Activated CD8-positive, alpha-beta memory T cell treated with anti-CD3 and anti-CD28 coated beads, Interleukin-2, amount 10 ng/mL, durations not matched to agents 7 days and 5 days (primary cell): ENCODE measurements at regions of chr5 and their contacts with region 1.

Region 1: DNA sequence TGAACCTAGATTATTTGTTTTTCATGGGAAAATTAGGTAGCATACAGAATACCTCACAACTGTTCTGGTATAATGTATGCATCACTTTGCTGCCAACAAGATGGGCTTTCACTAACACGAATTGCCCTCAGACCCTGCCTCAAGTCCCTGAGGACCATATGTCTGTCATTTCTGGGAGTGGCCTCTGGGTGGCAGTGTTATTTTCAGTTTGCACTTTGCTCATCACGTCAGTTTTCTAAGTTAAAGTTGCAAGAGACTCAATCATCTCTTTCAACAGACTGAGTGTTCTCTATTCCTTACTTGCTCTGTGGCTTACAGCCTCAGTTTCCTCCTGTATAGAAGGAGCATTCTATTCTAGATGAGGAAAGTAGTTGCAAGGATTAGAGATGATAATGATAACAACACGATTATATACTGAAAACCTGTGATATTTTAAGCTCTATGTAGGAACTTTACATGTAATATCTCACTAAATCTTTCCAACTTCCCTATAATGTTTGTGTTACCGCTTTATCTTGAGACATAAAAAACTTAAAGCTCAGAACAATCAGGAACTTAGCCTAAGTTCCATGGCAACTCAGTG is 55.7 kb downstream of the TSSK1B start:
- DNase-seq: peak; percentile 75
- ATAC-seq: peak; percentile 71
- H3K4me3 Mint-ChIP-seq: no peak overlapping the region
- H3K27ac Mint-ChIP-seq: peak overlapping the region; percentile 12
- H3K4me1 Mint-ChIP-seq: peaks cover 42% of the 10 kb centered on the region
- H3K27me3 Mint-ChIP-seq: peaks cover 13% of the 10 kb centered on the region

Region 2: GRCh38 chr5:113336975-113337374 is 42.1 kb before region 1 on chr5:
- CTCF ChIA-PET with region 1: interaction called, 11 read pairs
- DNase-seq: peak; percentile 45
- ATAC-seq: peak; percentile 72
- H3K4me3 Mint-ChIP-seq: no peak overlapping the region
- H3K27ac Mint-ChIP-seq: no peak overlapping the region
- H3K4me1 Mint-ChIP-seq: peaks cover 11% of the 10 kb centered on the region
- H3K27me3 Mint-ChIP-seq: peaks cover 7% of the 10 kb centered on the region

Region 3: DNA sequence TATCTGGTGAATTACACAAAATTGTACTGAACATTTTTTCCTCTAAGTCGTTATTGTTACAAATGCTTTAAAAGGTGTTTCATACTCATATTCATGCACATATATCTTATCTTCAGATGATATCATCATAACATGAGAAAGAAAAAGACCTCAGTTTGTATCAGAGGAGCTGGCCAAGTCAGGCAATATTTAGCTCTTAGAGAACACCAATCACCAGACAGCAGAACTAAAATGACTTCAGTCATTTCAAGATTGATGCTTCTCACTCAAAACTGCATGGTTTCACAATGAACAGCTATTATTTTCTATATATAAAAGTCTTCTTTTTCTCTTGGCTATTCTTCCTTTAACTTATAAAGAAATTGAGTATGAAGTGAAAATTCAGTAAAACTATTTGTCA is 11.2 kb after region 1 on chr5:
- CTCF ChIA-PET with region 1: interaction called, 12 read pairs
- DNase-seq: no peak
- ATAC-seq: no peak
- H3K4me3 Mint-ChIP-seq: no peak overlapping the region
- H3K27ac Mint-ChIP-seq: no peak overlapping the region
- H3K4me1 Mint-ChIP-seq: no peaks in the 10 kb centered on the region
- H3K27me3 Mint-ChIP-seq: peaks cover 28% of the 10 kb centered on the region

Region 4: GRCh38 chr5:113487781-113488644 is 109.0 kb after region 1 on chr5 and contains the start of gene MCC:
- CTCF ChIA-PET with region 1: interaction called, 10 read pairs
- DNase-seq: peak; percentile 46
- ATAC-seq: peak; percentile 62
- H3K4me3 Mint-ChIP-seq: peak within 1 kb of the TSS; percentile 68
- H3K27ac Mint-ChIP-seq: no peak within 1 kb of the TSS
- H3K4me1 Mint-ChIP-seq: peaks cover 23% of the 10 kb centered on the region
- H3K27me3 Mint-ChIP-seq: peaks cover 80% of the 10 kb centered on the region
- total RNA-seq, gene MCC: 7.4 to 7.5 TPM

Region 5: DNA sequence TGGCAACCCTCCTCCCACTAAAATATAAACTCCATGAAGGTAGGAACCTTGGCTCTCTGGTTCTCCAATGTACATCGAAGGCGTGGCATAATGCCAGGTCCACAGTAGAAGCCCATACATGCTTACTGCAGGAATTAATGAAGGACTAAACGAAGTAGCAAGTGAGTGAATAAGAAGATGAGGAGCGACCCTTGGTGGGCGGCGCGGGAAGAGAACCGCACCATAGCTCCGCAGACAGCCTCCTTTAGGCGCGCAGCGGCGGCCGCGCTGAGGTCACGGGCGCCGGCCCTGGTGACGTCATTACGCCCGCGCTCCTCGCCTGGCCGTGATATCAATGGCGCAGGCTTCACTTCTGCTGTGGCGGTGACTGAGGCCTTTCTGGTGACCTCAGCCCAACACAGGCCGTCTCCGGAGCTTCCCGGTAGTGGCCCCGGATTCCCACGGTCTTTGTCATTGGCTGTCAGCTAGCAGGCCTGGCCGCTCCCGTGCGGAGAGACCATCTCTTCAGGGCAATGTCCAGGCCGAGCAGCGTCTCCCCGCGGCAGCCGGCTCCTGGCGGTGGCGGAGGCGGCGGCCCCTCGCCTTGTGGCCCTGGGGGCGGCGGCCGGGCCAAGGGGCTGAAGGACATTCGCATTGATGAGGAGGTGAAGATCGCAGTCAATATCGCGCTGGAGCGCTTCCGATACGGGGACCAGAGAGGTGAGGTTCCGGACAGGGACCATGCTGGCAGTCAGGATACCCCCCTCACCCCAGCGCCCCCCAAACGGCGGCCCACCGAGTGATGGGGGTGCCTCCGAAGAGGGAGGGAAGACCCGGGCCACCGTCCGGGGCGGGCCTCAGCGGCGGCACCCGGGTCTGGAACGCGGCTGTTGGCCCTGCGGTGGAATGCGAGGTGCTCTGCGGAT is 134.6 kb after region 1 on chr5 and contains the start of gene YTHDC2:
- CTCF ChIA-PET with region 1: interaction called, 42 read pairs
- DNase-seq: peak; percentile 91
- ATAC-seq: peak; percentile 97
- H3K4me3 Mint-ChIP-seq: peak within 1 kb of the TSS; percentile 85
- H3K27ac Mint-ChIP-seq: peak within 1 kb of the TSS; percentile 84
- H3K4me1 Mint-ChIP-seq: peaks cover 32% of the 10 kb centered on the region
- H3K27me3 Mint-ChIP-seq: peaks cover 22% of the 10 kb centered on the region
- total RNA-seq, gene YTHDC2: 27.6 to 32.8 TPM